ENCODE measurements at regions of chr7 and their contacts with region 1.

Region 1: GRCh38 chr7:93185303-93186027 is 37.3 kb upstream of the SAMD9L start:
- DNase-seq: no peak
- ATAC-seq: no peak
- H3K4me3 ChIP-seq: no peak overlapping the region
- H3K27ac ChIP-seq: no peak overlapping the region
- H3K4me1 ChIP-seq: no peaks in the 10 kb centered on the region
- H3K27me3 ChIP-seq: no peaks in the 10 kb centered on the region
- CTCF ChIP-seq: no peak
- POLR2A ChIP-seq: no peak

Region 2: GRCh38 chr7:93165447-93165846 is 20.0 kb before region 1 on chr7:
- in situ Hi-C with region 1: no loop called
- intact Hi-C with region 1: loop called (anchors 1 kb)
- DNase-seq: no peak
- ATAC-seq: no peak
- H3K4me3 ChIP-seq: no peak overlapping the region
- H3K27ac ChIP-seq: no peak overlapping the region
- H3K4me1 ChIP-seq: no peaks in the 10 kb centered on the region
- H3K27me3 ChIP-seq: no peaks in the 10 kb centered on the region
- CTCF ChIP-seq: no peak
- POLR2A ChIP-seq: no peak

Region 3: DNA sequence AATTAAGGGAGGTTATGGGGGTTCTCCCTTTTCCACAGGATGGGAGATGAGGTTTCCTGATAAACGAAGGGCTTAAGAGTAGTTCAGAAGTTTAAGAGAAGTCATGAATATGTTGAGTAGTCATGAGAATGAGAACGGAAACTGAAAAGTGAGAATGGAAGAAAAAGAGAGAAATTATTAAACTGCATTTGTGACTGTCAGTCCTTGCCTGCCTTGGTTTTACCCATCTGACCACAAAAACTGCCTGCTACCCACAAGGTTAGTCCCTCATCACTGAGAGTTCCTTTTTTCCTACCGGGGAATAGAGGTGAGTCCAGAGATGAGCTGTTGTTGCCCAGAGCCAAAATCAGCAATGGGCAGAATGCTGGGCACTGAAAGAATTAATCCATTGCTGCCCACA is 992.8 kb after region 1 on chr7:
- in situ Hi-C with region 1: no loop called
- intact Hi-C with region 1: no loop called
- DNase-seq: no peak
- ATAC-seq: no peak
- H3K4me3 ChIP-seq: no peak overlapping the region
- H3K27ac ChIP-seq: no peak overlapping the region
- H3K4me1 ChIP-seq: peaks cover 0 to 2% of the 10 kb centered on the region in 2 donors
- H3K27me3 ChIP-seq: no peaks in the 10 kb centered on the region
- CTCF ChIP-seq: no peak
- POLR2A ChIP-seq: no peak

Measured in gastrocnemius medialis (tissue), 4 donors.